CD8-positive, alpha-beta memory T cell (primary cell): ENCODE measurements at regions of chr10 and their contacts with region 1.

Region 1: DNA sequence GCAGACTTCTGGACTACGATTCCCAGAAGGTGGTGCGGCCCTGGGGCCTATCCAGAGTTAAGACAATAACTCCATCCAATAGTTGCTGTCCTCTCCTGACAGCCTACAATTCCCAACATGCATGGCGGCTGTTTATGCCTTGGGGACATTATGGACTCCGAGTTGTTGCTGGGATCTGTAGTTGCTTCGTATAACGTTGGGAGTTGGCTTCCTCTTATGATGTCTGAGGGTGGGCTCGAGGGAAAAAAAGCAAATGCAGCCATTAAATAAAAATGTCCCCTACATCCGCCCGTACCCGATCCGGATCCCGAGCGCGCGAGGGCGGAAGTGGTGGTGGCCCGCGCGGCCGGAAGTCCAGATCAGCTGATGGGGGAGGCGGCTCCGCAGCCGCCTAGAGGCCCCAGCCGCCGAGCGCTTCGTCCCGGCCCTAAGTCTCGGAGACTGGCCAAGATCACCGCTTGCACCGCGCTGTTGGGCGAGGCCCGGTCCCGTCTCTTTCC is at the start of gene ZSWIM8:
- DNase-seq: peak; percentile 79 to 91 (median 87)
- H3K4me3 ChIP-seq: peak within 1 kb of the TSS; percentile 88
- H3K4me3 Mint-ChIP-seq: peak within 1 kb of the TSS; percentile 91 to 100 (median 99)
- H3K27ac ChIP-seq: peak within 1 kb of the TSS; percentile 77
- H3K27ac Mint-ChIP-seq: peak within 1 kb of the TSS; percentile 89 to 99 (median 97)
- H3K4me1 ChIP-seq: peaks cover 50% of the 10 kb centered on the region
- H3K4me1 Mint-ChIP-seq: peaks cover 50 to 70% (median 55%) of the 10 kb centered on the region in 3 donors
- H3K27me3 ChIP-seq: no peaks in the 10 kb centered on the region
- H3K27me3 Mint-ChIP-seq: no peaks in the 10 kb centered on the region
- total RNA-seq, gene ZSWIM8: 54.3 to 57.6 TPM

Region 2: DNA sequence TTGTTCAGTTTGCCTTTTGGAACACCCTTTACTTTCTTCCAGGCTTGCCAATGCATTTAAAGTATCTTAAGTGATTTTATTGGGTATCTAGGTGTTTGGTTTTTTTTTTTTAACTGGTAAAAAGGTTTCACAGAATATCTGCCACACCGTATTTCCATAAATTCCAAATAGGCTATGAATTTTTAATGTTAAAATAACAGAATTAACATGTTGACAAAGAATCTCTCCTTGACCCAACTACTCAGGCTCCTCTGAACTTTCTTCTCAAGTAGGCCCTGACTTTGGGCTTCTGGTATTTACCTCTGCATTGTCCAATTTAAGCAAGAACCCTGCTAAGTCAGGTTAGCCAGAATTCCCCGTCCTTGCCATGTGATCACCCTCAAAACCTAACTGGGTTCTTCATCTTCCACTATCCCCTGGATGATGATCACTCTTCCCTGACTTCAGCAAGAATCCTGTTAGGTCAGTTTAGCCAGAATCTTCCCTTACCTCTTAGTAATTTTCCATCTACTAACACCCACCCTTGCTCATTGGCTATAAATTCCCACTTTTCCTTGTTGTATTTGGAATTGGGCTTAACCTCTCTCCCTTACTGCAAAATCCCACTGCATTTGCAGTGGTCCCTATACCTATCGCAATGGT is 769.4 kb before region 1 on chr10:
- CTCF ChIA-PET with region 1: no interaction called
- POLR2A ChIA-PET with region 1: no interaction called
- DNase-seq: no peak
- H3K4me3 ChIP-seq: no peak overlapping the region
- H3K4me3 Mint-ChIP-seq: no peak overlapping the region
- H3K27ac ChIP-seq: no peak overlapping the region
- H3K27ac Mint-ChIP-seq: peak overlapping the region in 2 of 8 donors; percentile 5 to 32
- H3K4me1 ChIP-seq: no peaks in the 10 kb centered on the region
- H3K4me1 Mint-ChIP-seq: peaks cover 2 to 8% (median 6%) of the 10 kb centered on the region in 3 donors
- H3K27me3 ChIP-seq: no peaks in the 10 kb centered on the region
- H3K27me3 Mint-ChIP-seq: peaks cover 0 to 2% of the 10 kb centered on the region in 2 donors

Region 3: DNA sequence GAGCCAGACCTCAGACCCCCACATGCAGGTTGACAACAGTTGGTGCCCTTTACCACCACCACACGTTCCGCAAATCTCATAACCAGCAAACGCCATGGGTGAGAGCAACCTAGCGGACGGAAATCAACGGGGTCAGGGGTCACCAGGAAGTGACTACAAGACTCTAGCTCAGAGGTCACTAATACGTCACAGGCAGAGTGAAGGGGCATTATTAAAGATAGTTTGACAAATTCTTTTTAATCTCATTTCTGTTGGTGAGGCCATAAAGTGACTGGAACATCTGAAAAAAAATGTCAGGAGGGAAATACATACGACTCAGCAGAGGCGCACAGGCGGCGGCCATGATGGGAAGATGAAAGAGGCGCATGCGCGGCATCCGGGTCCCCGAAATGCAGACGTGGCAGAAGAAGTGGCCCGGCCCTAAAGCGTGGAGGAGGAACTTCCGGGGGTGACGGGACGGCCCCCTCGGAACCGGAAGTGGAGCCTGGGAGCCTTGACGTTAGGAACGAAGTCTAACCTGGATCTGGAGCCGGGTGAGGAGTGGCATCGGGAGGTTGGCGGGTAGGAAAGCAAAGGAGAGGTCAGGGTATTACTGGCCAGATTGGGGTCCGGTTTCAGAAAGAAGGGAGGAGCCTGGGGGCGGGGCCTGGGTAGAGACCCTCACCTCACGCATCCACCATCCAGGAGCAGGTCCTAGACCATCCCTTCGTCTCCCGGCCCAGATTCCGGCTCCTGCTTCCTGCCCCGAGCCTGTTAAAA is 41.2 kb before region 1 on chr10 and contains the start of gene SEC24C:
- CTCF ChIA-PET with region 1: interaction called, 5 read pairs
- POLR2A ChIA-PET with region 1: interaction called, 11 read pairs
- DNase-seq: peak; percentile 92 to 97 (median 95)
- H3K4me3 ChIP-seq: peak within 1 kb of the TSS; percentile 61
- H3K4me3 Mint-ChIP-seq: peak within 1 kb of the TSS; percentile 98 to 100 (median 99)
- H3K27ac ChIP-seq: peak within 1 kb of the TSS; percentile 91
- H3K27ac Mint-ChIP-seq: peak within 1 kb of the TSS; percentile 99 to 100 (median 100)
- H3K4me1 ChIP-seq: peaks cover 37% of the 10 kb centered on the region
- H3K4me1 Mint-ChIP-seq: peaks cover 32 to 45% (median 44%) of the 10 kb centered on the region in 3 donors
- H3K27me3 ChIP-seq: no peaks in the 10 kb centered on the region
- H3K27me3 Mint-ChIP-seq: no peaks in the 10 kb centered on the region
- total RNA-seq, gene SEC24C: 93.1 to 95.9 TPM

Region 4: GRCh38 chr10:73759512-73760115 is 25.7 kb before region 1 on chr10:
- CTCF ChIA-PET with region 1: interaction called, 4 read pairs
- POLR2A ChIA-PET with region 1: interaction called, 12 read pairs
- DNase-seq: peak; percentile 49 to 92 (median 79)
- H3K4me3 ChIP-seq: no peak overlapping the region
- H3K4me3 Mint-ChIP-seq: peak overlapping the region; percentile 34 to 90 (median 74)
- H3K27ac ChIP-seq: peak overlapping the region; percentile 72
- H3K27ac Mint-ChIP-seq: peak overlapping the region; percentile 90 to 99 (median 95)
- H3K4me1 ChIP-seq: peaks cover 54% of the 10 kb centered on the region
- H3K4me1 Mint-ChIP-seq: peaks cover 71 to 81% (median 78%) of the 10 kb centered on the region in 3 donors
- H3K27me3 ChIP-seq: no peaks in the 10 kb centered on the region
- H3K27me3 Mint-ChIP-seq: no peaks in the 10 kb centered on the region

Region 5: DNA sequence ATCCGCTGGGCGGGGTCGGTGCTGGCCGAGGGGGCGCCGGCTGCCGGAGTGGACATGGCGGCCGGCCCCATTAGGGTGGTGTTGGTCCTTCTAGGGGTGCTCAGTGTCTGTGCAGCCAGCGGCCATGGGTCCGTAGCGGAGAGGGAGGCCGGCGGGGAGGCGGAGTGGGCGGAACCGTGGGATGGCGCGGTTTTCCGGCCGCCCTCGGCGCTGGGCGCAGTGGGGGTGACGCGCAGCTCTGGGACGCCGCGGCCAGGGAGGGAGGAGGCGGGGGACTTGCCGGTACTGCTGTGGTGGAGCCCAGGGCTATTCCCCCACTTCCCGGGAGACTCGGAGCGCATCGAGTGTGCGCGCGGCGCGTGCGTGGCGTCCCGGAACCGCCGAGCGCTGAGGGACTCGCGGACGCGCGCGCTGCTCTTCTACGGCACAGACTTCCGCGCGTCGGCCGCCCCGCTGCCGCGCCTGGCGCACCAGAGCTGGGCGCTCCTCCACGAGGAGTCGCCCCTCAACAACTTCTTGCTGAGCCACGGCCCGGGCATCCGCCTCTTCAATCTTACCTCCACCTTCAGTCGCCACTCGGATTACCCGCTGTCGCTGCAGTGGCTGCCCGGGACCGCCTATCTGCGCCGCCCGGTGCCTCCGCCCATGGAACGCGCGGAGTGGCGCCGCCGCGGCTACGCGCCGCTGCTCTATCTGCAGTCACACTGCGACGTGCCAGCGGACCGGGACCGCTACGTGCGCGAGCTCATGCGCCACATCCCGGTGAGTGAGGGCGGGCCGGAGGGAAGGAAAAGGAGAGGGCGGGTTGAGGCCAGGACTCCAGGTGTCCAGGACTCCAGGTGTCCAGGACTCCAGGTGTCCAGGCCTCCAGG is 12.8 kb before region 1 on chr10:
- CTCF ChIA-PET with region 1: interaction called, 35 read pairs
- POLR2A ChIA-PET with region 1: interaction called, 88 read pairs
- DNase-seq: peak; percentile 72 to 88 (median 82)
- H3K4me3 ChIP-seq: peak overlapping the region; percentile 92
- H3K4me3 Mint-ChIP-seq: peak overlapping the region; percentile 91 to 98 (median 97)
- H3K27ac ChIP-seq: peak overlapping the region; percentile 90
- H3K27ac Mint-ChIP-seq: peak overlapping the region; percentile 87 to 97 (median 94)
- H3K4me1 ChIP-seq: peaks cover 45% of the 10 kb centered on the region
- H3K4me1 Mint-ChIP-seq: peaks cover 50 to 75% (median 64%) of the 10 kb centered on the region in 3 donors
- H3K27me3 ChIP-seq: no peaks in the 10 kb centered on the region
- H3K27me3 Mint-ChIP-seq: peaks cover 0 to 4% of the 10 kb centered on the region in 2 donors

Region 6: GRCh38 chr10:73798927-73799563 is 13.8 kb after region 1 on chr10:
- CTCF ChIA-PET with region 1: interaction called, 10 read pairs
- POLR2A ChIA-PET with region 1: interaction called, 4 read pairs
- DNase-seq: no peak
- H3K4me3 ChIP-seq: no peak overlapping the region
- H3K4me3 Mint-ChIP-seq: no peak overlapping the region
- H3K27ac ChIP-seq: no peak overlapping the region
- H3K27ac Mint-ChIP-seq: peak overlapping the region in 3 of 8 donors; percentile 35 to 79 (median 57)
- H3K4me1 ChIP-seq: no peaks in the 10 kb centered on the region
- H3K4me1 Mint-ChIP-seq: peaks cover 0 to 4% (median 1%) of the 10 kb centered on the region in 3 donors
- H3K27me3 ChIP-seq: no peaks in the 10 kb centered on the region
- H3K27me3 Mint-ChIP-seq: peaks cover 0 to 2% of the 10 kb centered on the region in 2 donors

Region 7: GRCh38 chr10:73810735-73811465 is 25.6 kb after region 1 on chr10:
- CTCF ChIA-PET with region 1: interaction called, 8 read pairs
- POLR2A ChIA-PET with region 1: interaction called, 13 read pairs
- DNase-seq: peak; percentile 51 to 82 (median 70)
- H3K4me3 ChIP-seq: peak overlapping the region; percentile 64
- H3K4me3 Mint-ChIP-seq: peak overlapping the region; percentile 86 to 96 (median 91)
- H3K27ac ChIP-seq: peak overlapping the region; percentile 92
- H3K27ac Mint-ChIP-seq: peak overlapping the region; percentile 85 to 97 (median 94)
- H3K4me1 ChIP-seq: peaks cover 40% of the 10 kb centered on the region
- H3K4me1 Mint-ChIP-seq: peaks cover 39 to 52% (median 43%) of the 10 kb centered on the region in 3 donors
- H3K27me3 ChIP-seq: no peaks in the 10 kb centered on the region
- H3K27me3 Mint-ChIP-seq: no peaks in the 10 kb centered on the region